ENCODE measurements at regions of chr7 and their contacts with region 1.

Region 1: DNA sequence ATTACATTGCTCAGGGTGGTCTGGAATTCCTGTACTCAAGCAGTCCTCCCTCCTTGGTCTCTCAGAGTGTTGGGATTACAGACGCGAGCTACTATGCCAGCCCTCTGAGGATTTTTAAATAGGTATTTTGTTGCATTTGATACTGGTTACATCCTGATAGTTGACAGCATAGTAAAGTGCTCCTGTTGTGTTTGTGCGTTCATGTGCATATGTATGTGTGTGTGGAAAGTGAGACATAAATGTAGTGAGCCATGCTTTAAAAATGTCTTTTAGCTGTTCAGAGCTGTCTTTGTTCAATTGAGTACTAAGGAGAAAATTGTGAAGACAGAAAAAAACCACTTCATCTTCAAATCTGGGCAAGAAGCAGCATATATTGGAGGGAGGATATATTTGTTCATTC is 27.8 kb downstream of the ZNRF2 start:
- DNase-seq: no peak
- H3K4me3 ChIP-seq: no peak overlapping the region
- H3K27ac ChIP-seq: no peak overlapping the region
- H3K4me1 ChIP-seq: peaks cover 2 to 7% (median 5%) of the 10 kb centered on the region in 4 experiments
- H3K27me3 ChIP-seq: no peaks in the 10 kb centered on the region

Region 2: GRCh38 chr7:30091491-30091912 is 220.7 kb before region 1 on chr7:
- CTCF ChIA-PET with region 1: no interaction called
- POLR2A ChIA-PET with region 1: no interaction called
- DNase-seq: no peak
- H3K4me3 ChIP-seq: no peak overlapping the region
- H3K27ac ChIP-seq: no peak overlapping the region
- H3K4me1 ChIP-seq: peaks cover 0 to 8% (median 0%) of the 10 kb centered on the region in 4 experiments
- H3K27me3 ChIP-seq: no peaks in the 10 kb centered on the region

Region 3: GRCh38 chr7:30201161-30201666 is 111.0 kb before region 1 on chr7:
- CTCF ChIA-PET with region 1: no interaction called
- POLR2A ChIA-PET with region 1: no interaction called
- DNase-seq: no peak
- H3K4me3 ChIP-seq: no peak overlapping the region
- H3K27ac ChIP-seq: no peak overlapping the region
- H3K4me1 ChIP-seq: no peaks in the 10 kb centered on the region
- H3K27me3 ChIP-seq: no peaks in the 10 kb centered on the region

Region 4: DNA sequence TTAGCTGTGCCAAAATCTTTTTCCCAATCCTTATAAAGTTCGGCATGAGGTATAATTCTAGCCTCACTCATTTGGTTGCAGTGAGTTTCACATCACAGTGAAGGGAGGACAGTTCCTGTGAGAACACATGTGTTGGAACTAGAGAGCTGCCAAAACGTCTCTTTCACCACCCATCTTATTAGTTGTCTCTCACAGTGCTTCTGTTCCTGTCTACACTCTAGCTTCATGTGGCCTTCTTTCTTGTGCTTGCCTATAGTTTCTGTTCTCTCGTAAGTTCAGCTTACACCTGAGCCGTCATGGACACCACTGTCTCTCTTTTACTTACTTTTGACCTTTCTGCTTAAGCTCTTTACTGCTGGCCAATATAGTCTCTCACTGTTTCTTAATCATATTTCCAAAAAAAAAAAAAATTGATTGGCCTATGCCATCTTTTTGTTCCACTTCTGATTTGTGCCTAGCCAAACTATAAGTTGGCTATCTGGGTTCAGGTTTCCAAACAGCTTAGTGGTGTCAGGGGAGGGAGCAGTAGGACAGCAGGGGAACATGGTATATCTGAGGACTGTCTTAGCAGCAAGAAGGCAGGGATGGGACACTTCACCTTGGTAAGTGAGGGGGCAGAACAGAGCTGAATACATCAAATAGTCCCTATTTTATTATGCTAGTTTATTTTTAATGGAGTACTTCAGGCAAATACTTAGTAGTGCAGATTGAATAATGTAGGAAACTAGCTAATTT is 10.3 kb after region 1 on chr7:
- CTCF ChIA-PET with region 1: interaction called, 11 read pairs
- POLR2A ChIA-PET with region 1: interaction called, 3 read pairs
- DNase-seq: peak in 2 of 3 donors; percentile 25 to 45
- H3K4me3 ChIP-seq: peak overlapping the region in 4 of 7 experiments; percentile 33 to 71 (median 62)
- H3K27ac ChIP-seq: peak overlapping the region; percentile 41 to 76
- H3K4me1 ChIP-seq: peaks cover 14 to 22% (median 19%) of the 10 kb centered on the region in 4 experiments
- H3K27me3 ChIP-seq: no peaks in the 10 kb centered on the region